ENCODE measurements at regions of chr16 and their contacts with region 1.

Region 1: GRCh38 chr16:84484579-84485254 is 19.7 kb downstream of the MEAK7 start:
- DNase-seq: peak; percentile 64 to 82
- H3K4me3 ChIP-seq: no peak overlapping the region
- H3K27ac ChIP-seq: no peak overlapping the region
- H3K4me1 ChIP-seq: no peaks in the 10 kb centered on the region
- H3K27me3 ChIP-seq: no peaks in the 10 kb centered on the region
- CTCF ChIP-seq: peak in 5 of 7 experiments; percentile 57 to 82 (median 66)
- EP300 ChIP-seq: no peak
- POLR2A ChIP-seq: no peak

Region 2: GRCh38 chr16:84266451-84266850 is 218.3 kb before region 1 on chr16:
- intact Hi-C with region 1: no loop called
- DNase-seq: peak in 1 of 2 donors; percentile 74
- H3K4me3 ChIP-seq: no peak overlapping the region
- H3K27ac ChIP-seq: no peak overlapping the region
- H3K4me1 ChIP-seq: no peaks in the 10 kb centered on the region
- H3K27me3 ChIP-seq: peaks cover 0 to 3% (median 0%) of the 10 kb centered on the region in 3 donors
- CTCF ChIP-seq: no peak
- EP300 ChIP-seq: no peak
- POLR2A ChIP-seq: no peak

Region 3: GRCh38 chr16:84277237-84277823 is 207.4 kb before region 1 on chr16:
- intact Hi-C with region 1: loop called (anchors 5 kb)
- DNase-seq: peak; percentile 77 to 85
- H3K4me3 ChIP-seq: no peak overlapping the region
- H3K27ac ChIP-seq: no peak overlapping the region
- H3K4me1 ChIP-seq: peaks cover 0 to 5% (median 0%) of the 10 kb centered on the region in 4 donors
- H3K27me3 ChIP-seq: no peaks in the 10 kb centered on the region
- CTCF ChIP-seq: peak in 5 of 7 experiments; percentile 66 to 87 (median 79)
- EP300 ChIP-seq: no peak
- POLR2A ChIP-seq: no peak